ENCODE measurements at regions of chr2 and their contacts with region 1.

Region 1: GRCh38 chr2:222242532-222242931 is 56.3 kb downstream of the PAX3 start:
- DNase-seq: no peak
- H3K4me3 Mint-ChIP-seq: no peak overlapping the region
- H3K27ac Mint-ChIP-seq: no peak overlapping the region
- H3K4me1 Mint-ChIP-seq: peaks cover 2% of the 10 kb centered on the region
- H3K27me3 Mint-ChIP-seq: peaks cover 45% of the 10 kb centered on the region

Region 2: GRCh38 chr2:222304737-222305515 is 62.4 kb after region 1 on chr2:
- intact Hi-C with region 1: loop called (anchors 5 kb)
- DNase-seq: no peak
- H3K4me3 Mint-ChIP-seq: peak overlapping the region; percentile 62
- H3K27ac Mint-ChIP-seq: peak overlapping the region; percentile 49
- H3K4me1 Mint-ChIP-seq: peaks cover 23% of the 10 kb centered on the region
- H3K27me3 Mint-ChIP-seq: peaks cover 96% of the 10 kb centered on the region

Region 3: GRCh38 chr2:222709191-222709891 is 466.8 kb after region 1 on chr2:
- intact Hi-C with region 1: no loop called
- DNase-seq: no peak
- H3K4me3 Mint-ChIP-seq: no peak overlapping the region
- H3K27ac Mint-ChIP-seq: no peak overlapping the region
- H3K4me1 Mint-ChIP-seq: peaks cover 17% of the 10 kb centered on the region
- H3K27me3 Mint-ChIP-seq: peaks cover 38% of the 10 kb centered on the region